ENCODE measurements at regions of chr14 and their contacts with region 1.

Region 1: DNA sequence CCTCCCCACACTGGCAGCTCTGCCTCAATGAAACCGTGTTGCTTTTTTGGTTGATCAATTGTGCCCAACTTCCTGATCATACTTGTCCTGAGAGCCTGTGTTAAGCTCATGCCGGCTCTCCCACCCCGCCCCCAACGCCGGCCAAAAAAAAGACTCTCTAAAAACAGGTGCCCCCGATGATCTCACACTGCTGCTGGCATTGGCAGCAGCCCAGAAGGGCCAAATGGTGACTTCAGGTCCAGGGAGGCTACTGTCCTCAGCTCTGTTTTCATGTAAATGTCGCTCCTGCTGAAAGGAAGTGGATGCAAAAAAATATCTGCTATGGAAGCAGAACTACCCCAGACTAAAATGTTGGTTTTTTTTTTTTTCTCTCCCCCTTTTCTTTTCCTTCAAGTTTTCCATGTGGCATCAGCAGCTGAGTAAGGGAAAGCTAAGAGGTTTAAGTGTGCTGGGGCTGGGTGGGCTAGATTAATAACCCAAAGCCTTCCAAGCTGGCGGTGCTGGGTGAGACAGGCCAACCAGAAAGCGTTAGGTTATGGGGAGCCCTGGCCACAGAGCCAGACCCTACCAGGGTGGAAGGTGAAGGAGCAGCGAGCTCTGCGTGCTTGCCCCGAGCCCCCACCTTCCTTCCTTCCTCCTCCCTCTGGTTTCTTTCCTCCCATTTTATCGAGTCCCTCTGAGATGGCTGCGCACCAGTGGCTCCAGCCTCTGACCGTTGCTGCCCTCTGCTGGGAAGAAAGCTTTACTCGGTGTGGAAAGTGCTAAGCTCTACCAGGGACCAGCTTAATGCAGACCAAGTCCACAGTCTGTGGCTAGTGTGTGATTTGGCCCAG is 396.1 kb downstream of the NRXN3 start:
- DNase-seq: peak; percentile 7 to 58 (median 35)
- ATAC-seq: peak; percentile 63
- H3K4me3 ChIP-seq: no peak overlapping the region
- H3K4me3 Mint-ChIP-seq: peak overlapping the region; percentile 40
- H3K27ac ChIP-seq: no peak overlapping the region
- H3K27ac Mint-ChIP-seq: no peak overlapping the region
- H3K4me1 ChIP-seq: peaks cover 3% of the 10 kb centered on the region
- H3K4me1 Mint-ChIP-seq: peaks cover 10% of the 10 kb centered on the region
- H3K27me3 ChIP-seq: no peaks in the 10 kb centered on the region
- H3K27me3 Mint-ChIP-seq: no peaks in the 10 kb centered on the region
- CTCF ChIP-seq: peak; percentile 29

Region 2: GRCh38 chr14:77654001-77654441 is 912.2 kb before region 1 on chr14:
- CTCF ChIA-PET with region 1: no interaction called
- POLR2A ChIA-PET with region 1: no interaction called
- intact Hi-C with region 1: loop called in 1 of 2 experiments (anchors 10 kb)
- DNase-seq: no peak
- ATAC-seq: no peak
- H3K4me3 ChIP-seq: no peak overlapping the region
- H3K4me3 Mint-ChIP-seq: no peak overlapping the region
- H3K27ac ChIP-seq: no peak overlapping the region
- H3K27ac Mint-ChIP-seq: no peak overlapping the region
- H3K4me1 ChIP-seq: peaks cover 6% of the 10 kb centered on the region
- H3K4me1 Mint-ChIP-seq: peaks cover 4% of the 10 kb centered on the region
- H3K27me3 ChIP-seq: no peaks in the 10 kb centered on the region
- H3K27me3 Mint-ChIP-seq: no peaks in the 10 kb centered on the region
- CTCF ChIP-seq: no peak

Region 3: GRCh38 chr14:77862154-77862786 is 704.0 kb before region 1 on chr14:
- CTCF ChIA-PET with region 1: interaction called, 3 read pairs
- POLR2A ChIA-PET with region 1: no interaction called
- intact Hi-C with region 1: loop called in 1 of 2 experiments (anchors 2 kb)
- DNase-seq: peak; percentile 56 to 81 (median 65)
- ATAC-seq: peak; percentile 37
- H3K4me3 ChIP-seq: no peak overlapping the region
- H3K4me3 Mint-ChIP-seq: no peak overlapping the region
- H3K27ac ChIP-seq: no peak overlapping the region
- H3K27ac Mint-ChIP-seq: no peak overlapping the region
- H3K4me1 ChIP-seq: no peaks in the 10 kb centered on the region
- H3K4me1 Mint-ChIP-seq: no peaks in the 10 kb centered on the region
- H3K27me3 ChIP-seq: no peaks in the 10 kb centered on the region
- H3K27me3 Mint-ChIP-seq: no peaks in the 10 kb centered on the region
- CTCF ChIP-seq: peak; percentile 97

Region 4: DNA sequence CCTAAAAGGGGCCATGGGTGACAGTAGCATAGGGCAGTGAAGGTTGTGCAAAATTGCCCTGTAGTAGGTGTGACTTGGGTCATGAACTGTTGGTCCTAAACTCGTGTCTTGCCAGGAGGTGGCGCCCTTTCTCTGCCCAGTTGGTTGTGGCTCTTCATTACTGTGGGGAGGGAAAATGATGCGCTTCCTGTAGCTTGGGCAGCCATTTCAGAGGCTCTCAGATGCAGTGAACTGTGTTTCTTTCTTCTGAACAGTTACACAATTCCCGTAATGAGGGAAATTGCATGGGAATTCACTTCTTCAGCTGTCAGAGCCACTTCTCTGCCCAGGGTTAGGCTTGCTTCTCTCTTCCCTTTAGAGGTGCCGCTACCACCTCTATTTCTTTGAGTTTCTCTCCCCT is 544.2 kb before region 1 on chr14:
- CTCF ChIA-PET with region 1: no interaction called
- POLR2A ChIA-PET with region 1: no interaction called
- intact Hi-C with region 1: loop called in 1 of 2 experiments (anchors 5 kb)
- DNase-seq: peak in 5 of 14 experiments; percentile 2 to 34 (median 15)
- ATAC-seq: no peak
- H3K4me3 ChIP-seq: no peak overlapping the region
- H3K4me3 Mint-ChIP-seq: no peak overlapping the region
- H3K27ac ChIP-seq: no peak overlapping the region
- H3K27ac Mint-ChIP-seq: no peak overlapping the region
- H3K4me1 ChIP-seq: no peaks in the 10 kb centered on the region
- H3K4me1 Mint-ChIP-seq: no peaks in the 10 kb centered on the region
- H3K27me3 ChIP-seq: peaks cover 0 to 5% of the 10 kb centered on the region in 2 experiments
- H3K27me3 Mint-ChIP-seq: peaks cover 21% of the 10 kb centered on the region
- CTCF ChIP-seq: no peak

Region 5: GRCh38 chr14:78921856-78922255 is 355.6 kb after region 1 on chr14:
- CTCF ChIA-PET with region 1: no interaction called
- POLR2A ChIA-PET with region 1: no interaction called
- intact Hi-C with region 1: no loop called
- DNase-seq: no peak
- ATAC-seq: no peak
- H3K4me3 ChIP-seq: no peak overlapping the region
- H3K4me3 Mint-ChIP-seq: no peak overlapping the region
- H3K27ac ChIP-seq: no peak overlapping the region
- H3K27ac Mint-ChIP-seq: no peak overlapping the region
- H3K4me1 ChIP-seq: no peaks in the 10 kb centered on the region
- H3K4me1 Mint-ChIP-seq: no peaks in the 10 kb centered on the region
- H3K27me3 ChIP-seq: no peaks in the 10 kb centered on the region
- H3K27me3 Mint-ChIP-seq: no peaks in the 10 kb centered on the region
- CTCF ChIP-seq: no peak

Measured in CD4-positive, alpha-beta T cell (primary cell).